A549 (cell line): ENCODE measurements at regions of chr3 and their contacts with region 1.

Region 1: DNA sequence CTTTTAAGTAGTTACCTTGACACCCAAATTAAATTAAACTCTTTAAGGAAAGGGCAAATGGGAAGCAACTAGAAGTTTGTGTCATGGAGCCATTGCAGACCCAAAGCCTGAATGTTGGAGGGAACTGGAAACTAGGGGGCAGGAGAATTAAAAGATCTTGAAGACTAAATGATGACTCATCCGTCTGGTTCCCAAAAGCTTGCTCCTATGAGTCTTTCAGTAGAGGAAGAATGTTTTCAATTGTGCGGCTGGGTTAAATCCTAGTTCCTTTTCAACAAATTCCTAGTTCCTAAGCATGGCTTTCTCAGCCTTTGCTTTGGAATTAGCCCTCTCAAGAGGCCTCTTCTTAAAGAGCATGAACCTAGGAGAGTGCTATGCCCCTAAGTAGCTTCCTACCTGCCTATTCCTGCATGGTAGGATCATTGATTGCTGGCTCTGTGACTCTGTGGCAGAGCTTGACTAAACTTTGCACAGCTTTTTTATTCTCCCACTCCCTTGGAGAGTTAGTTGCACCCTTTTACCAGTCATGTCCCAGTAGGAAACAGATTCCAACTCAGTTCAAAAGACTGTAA is 17.7 kb downstream of the CLEC3B start:
- DNase-seq: peak in 1 of 2 experiments; percentile 31
- ATAC-seq: no peak
- H3K4me3 ChIP-seq: no peak overlapping the region
- H3K27ac ChIP-seq: peak overlapping the region; percentile 49 to 72; a peak in 3 of 6 replicates
- H3K4me1 ChIP-seq: peaks cover 15% of the 10 kb centered on the region; the same call in 1 of the 3 replicates
- CTCF ChIP-seq: no peak
- EP300 ChIP-seq: no peak
- POLR2A ChIP-seq: no peak
- RAD21 ChIP-seq: no peak; a peak in 1 of 5 replicates

Region 2: GRCh38 chr3:45029661-45030060 is 14.2 kb before region 1 on chr3:
- CTCF ChIA-PET with region 1: interaction called, 12 read pairs
- POLR2A ChIA-PET with region 1: no interaction called
- DNase-seq: no peak
- ATAC-seq: no peak
- H3K4me3 ChIP-seq: no peak overlapping the region
- H3K27ac ChIP-seq: no peak overlapping the region
- H3K4me1 ChIP-seq: no peaks in the 10 kb centered on the region
- CTCF ChIP-seq: no peak
- EP300 ChIP-seq: no peak
- POLR2A ChIP-seq: no peak
- RAD21 ChIP-seq: no peak

Region 3: GRCh38 chr3:45055411-45056143 is 11.8 kb after region 1 on chr3:
- CTCF ChIA-PET with region 1: interaction called, 19 read pairs
- POLR2A ChIA-PET with region 1: no interaction called
- DNase-seq: peak; percentile 23 to 49
- ATAC-seq: peak in 1 of 2 experiments; percentile 70; a peak in 3 of 6 replicates
- H3K4me3 ChIP-seq: no peak overlapping the region
- H3K27ac ChIP-seq: peak overlapping the region; percentile 42 to 62; a peak in 5 of 6 replicates
- H3K4me1 ChIP-seq: peaks cover 20% of the 10 kb centered on the region
- CTCF ChIP-seq: peak; percentile 6; the same call in 1 of the 3 replicates
- EP300 ChIP-seq: no peak
- POLR2A ChIP-seq: no peak
- RAD21 ChIP-seq: peak in 1 of 2 experiments; percentile 27; a peak in 1 of 5 replicates

Region 4: GRCh38 chr3:45218578-45219390 is 175.0 kb after region 1 on chr3:
- CTCF ChIA-PET with region 1: interaction called, 339 read pairs
- POLR2A ChIA-PET with region 1: no interaction called
- DNase-seq: no peak
- ATAC-seq: peak in 1 of 2 experiments; percentile 53; a peak in 3 of 6 replicates
- H3K4me3 ChIP-seq: no peak overlapping the region
- H3K27ac ChIP-seq: peak overlapping the region in 1 of 2 experiments; percentile 63; a peak in 2 of 6 replicates
- H3K4me1 ChIP-seq: peaks cover 13% of the 10 kb centered on the region
- CTCF ChIP-seq: no peak
- EP300 ChIP-seq: no peak
- POLR2A ChIP-seq: no peak
- RAD21 ChIP-seq: no peak

Region 5: DNA sequence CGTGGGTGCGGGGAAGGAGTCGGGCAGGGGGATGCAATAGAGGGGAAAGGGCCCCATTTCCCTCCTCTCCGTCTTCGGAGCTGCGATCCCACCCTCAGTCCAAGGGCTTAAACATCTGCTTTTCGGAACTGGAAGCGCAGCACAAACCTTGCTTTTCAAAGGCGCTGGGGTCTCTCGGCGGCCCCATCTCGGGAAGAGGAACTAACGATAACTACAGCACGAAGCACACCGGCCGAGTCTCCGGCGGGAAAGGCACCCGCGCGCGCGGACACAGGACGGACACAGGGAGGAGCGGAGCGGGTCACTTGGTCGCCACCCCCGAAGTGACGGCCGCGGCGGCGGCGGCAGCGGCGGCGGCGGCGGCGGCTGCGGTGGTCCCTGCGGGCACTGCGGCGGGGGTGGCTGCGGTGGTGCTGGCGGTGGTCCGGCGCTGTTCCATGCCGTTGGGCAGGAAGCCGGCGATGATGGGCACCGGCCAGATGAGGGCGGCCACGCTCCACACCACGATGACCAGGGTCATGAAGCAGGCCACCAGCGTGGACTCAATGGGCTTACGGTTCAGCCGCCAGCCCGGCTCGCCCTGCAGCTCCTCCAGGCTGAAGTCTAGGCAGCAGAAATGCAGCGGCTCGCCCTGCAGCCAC is 181.1 kb after region 1 on chr3:
- CTCF ChIA-PET with region 1: interaction called, 33 read pairs
- POLR2A ChIA-PET with region 1: no interaction called
- DNase-seq: peak; percentile 50 to 75
- ATAC-seq: peak; percentile 89 to 91
- H3K4me3 ChIP-seq: peak overlapping the region; percentile 62
- H3K27ac ChIP-seq: peak overlapping the region; percentile 68 to 92
- H3K4me1 ChIP-seq: peaks cover 8% of the 10 kb centered on the region; the same call in 2 of the 3 replicates
- CTCF ChIP-seq: peak; percentile 61
- EP300 ChIP-seq: no peak
- POLR2A ChIP-seq: no peak
- RAD21 ChIP-seq: peak; percentile 76 to 77

Region 6: GRCh38 chr3:45507820-45508317 is 464.1 kb after region 1 on chr3:
- CTCF ChIA-PET with region 1: interaction called, 11 read pairs
- POLR2A ChIA-PET with region 1: no interaction called
- DNase-seq: peak in 1 of 2 experiments; percentile 27
- ATAC-seq: peak; percentile 69 to 82; a peak in 5 of 6 replicates
- H3K4me3 ChIP-seq: no peak overlapping the region
- H3K27ac ChIP-seq: no peak overlapping the region
- H3K4me1 ChIP-seq: 0 out of 3 replicates have a peak, but pooled peaks cover 7% of the 10 kb centered on the region
- CTCF ChIP-seq: no peak
- EP300 ChIP-seq: no peak
- POLR2A ChIP-seq: no peak
- RAD21 ChIP-seq: no peak; a peak in 1 of 5 replicates

Region 7: GRCh38 chr3:45546716-45547701 is 503.2 kb after region 1 on chr3:
- CTCF ChIA-PET with region 1: interaction called, 11 read pairs
- POLR2A ChIA-PET with region 1: no interaction called
- DNase-seq: peak in 1 of 2 experiments; percentile 63
- ATAC-seq: peak; percentile 44 to 80; a peak in 5 of 6 replicates
- H3K4me3 ChIP-seq: no peak overlapping the region
- H3K27ac ChIP-seq: peak overlapping the region; percentile 70 to 71
- H3K4me1 ChIP-seq: peaks cover 49% of the 10 kb centered on the region
- CTCF ChIP-seq: peak; percentile 50
- EP300 ChIP-seq: no peak
- POLR2A ChIP-seq: no peak
- RAD21 ChIP-seq: peak in 1 of 2 experiments; percentile 15; a peak in 1 of 5 replicates